Tibial artery (tissue), 4 donors: ENCODE measurements at regions of chr2 and their contacts with region 1.

Region 1: DNA sequence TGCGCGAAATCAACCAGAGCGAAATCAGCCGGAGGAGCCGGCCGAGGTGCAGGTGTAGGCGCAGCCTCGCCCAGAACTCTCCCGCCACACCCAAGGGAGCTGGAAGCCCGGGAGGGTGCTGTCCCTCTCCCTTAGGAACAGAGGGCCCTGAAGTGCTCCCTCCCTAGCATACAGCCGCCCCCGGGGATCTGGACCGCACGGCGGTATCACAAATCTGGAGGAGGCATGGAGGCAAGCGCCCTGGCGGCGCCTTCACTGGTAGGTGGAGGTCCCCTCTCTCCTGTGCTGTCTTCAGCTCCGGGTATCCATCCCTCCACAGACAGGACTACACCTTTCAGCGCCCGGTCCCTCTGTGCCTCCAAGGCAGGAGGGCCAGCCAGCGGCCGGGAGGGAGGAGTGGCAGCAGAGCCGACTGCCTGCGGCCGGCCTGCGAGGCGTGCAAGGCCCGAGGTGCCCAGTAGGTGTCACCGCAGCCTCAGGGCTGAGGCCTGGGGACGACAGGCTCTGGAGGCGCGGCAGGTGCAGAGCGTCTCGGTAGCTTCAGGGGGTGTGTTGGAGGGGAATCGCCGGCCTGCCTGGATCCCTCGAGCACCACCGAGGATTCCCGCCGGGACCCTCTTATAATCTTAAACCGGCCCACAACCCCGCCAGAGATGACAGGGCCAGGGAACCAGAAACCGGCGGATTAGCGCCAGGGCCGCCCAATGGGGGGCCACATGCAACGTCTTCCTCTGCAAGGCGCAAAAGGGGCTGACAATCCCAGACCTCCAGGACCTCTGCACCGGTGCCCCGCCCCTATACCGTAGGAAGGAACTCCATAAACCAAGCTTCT is 2.8 kb downstream of the IHH start:
- DNase-seq: peak; percentile 47 to 76
- H3K4me3 ChIP-seq: no peak overlapping the region
- H3K27ac ChIP-seq: no peak overlapping the region
- H3K4me1 ChIP-seq: peaks cover 6 to 42% (median 40%) of the 10 kb centered on the region in 4 donors
- H3K27me3 ChIP-seq: peaks cover 4 to 85% of the 10 kb centered on the region in 2 donors
- CTCF ChIP-seq: peak; percentile 93 to 95

Region 2: GRCh38 chr2:219119422-219120043 is 61.6 kb after region 1 on chr2:
- intact Hi-C with region 1: loop called (anchors 2 kb)
- DNase-seq: peak in 1 of 2 donors; percentile 59
- H3K4me3 ChIP-seq: no peak overlapping the region
- H3K27ac ChIP-seq: no peak overlapping the region
- H3K4me1 ChIP-seq: peaks cover 0 to 19% (median 4%) of the 10 kb centered on the region in 4 donors
- H3K27me3 ChIP-seq: no peaks in the 10 kb centered on the region
- CTCF ChIP-seq: peak; percentile 72 to 73

Region 3: DNA sequence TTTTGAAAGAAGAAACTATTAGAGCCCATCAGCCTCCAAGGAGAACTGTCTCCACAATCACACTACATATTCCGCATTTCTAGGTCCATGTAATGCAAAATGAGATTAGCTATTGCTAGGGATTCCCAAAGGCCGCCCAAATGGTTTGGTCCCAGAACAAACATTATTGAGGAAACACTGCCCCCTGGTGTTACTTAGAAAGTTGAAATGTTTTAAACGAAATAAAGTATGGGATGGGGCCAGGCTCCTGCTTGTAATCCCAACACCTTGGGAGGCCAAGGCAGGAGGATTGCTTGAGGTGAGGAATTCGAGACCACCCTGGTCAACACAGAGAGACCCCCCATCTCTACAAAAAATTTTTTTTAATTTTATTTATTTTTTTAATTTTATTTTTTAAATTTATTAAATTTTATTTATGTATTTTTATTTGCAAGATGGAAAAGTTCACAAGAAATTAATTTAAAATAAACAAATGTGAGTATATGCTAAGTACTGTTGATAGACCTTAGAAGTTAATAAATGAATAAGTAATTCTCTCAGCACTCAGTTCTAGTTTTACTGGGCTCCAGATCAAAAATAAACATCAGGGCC is 97.2 kb after region 1 on chr2:
- intact Hi-C with region 1: loop called (anchors 2 kb)
- DNase-seq: no peak
- H3K4me3 ChIP-seq: no peak overlapping the region
- H3K27ac ChIP-seq: no peak overlapping the region
- H3K4me1 ChIP-seq: peaks cover 0 to 5% (median 4%) of the 10 kb centered on the region in 4 donors
- H3K27me3 ChIP-seq: no peaks in the 10 kb centered on the region
- CTCF ChIP-seq: peak; percentile 60 to 83

Region 4: DNA sequence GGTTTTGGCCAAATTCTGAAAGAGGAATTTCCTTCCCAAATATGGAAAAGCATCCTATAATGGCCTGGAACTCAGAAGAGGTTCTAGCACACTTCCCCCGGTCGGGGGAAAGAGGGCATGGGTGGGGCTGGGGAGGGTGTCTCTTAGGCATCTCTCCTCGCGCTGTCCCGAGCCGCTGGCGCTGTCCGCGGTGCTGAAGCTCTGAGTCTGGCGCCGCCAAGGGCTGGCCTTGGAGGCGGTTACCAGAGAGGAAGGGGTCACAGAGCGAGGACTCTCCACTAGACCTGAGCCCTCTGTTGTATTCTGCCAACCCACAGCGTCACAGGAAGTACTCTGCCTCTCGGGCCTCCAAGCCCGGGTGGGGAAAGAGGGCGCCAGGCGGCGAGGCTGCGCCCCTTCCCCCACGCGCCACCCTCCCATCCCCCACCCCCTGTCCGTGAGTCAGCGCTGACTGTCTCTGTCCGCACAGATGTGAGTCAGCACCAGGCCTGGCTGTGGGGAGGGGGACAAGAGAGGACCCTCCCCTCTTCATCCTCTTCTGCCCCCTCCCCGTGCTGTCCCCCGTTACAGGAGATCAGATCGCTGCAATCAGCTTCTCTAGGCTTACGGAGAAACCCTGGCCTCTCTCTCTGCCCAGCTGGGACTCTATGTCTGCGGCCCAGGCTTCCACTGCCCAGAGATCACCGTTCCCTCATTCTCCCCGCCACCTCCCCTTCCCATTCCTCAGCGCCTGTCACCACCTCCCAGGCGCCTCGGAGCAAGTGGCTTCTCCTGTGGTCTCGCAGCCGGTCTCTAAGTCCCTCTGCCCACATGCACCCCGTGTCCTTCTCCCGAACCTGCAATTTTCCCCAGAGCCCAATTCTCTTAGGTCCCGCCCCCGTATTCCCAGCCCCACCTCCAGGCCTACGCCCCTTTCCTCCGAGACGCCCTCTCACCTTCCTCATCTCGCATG is 250.5 kb after region 1 on chr2:
- intact Hi-C with region 1: loop called (anchors 10 kb)
- DNase-seq: no peak
- H3K4me3 ChIP-seq: no peak overlapping the region
- H3K27ac ChIP-seq: no peak overlapping the region
- H3K4me1 ChIP-seq: peaks cover 0 to 11% (median 2%) of the 10 kb centered on the region in 4 donors
- H3K27me3 ChIP-seq: peaks cover 3 to 67% of the 10 kb centered on the region in 2 donors
- CTCF ChIP-seq: no peak